IMR-90 (cell line): ENCODE measurements at regions of chr11 and their contacts with region 1.

Region 1: GRCh38 chr11:7513234-7514098 is at the start of gene PPFIBP2:
- DNase-seq: peak; percentile 47
- ATAC-seq: peak; percentile 98
- H3K4me3 ChIP-seq: peak within 1 kb of the TSS; percentile 58
- H3K27ac ChIP-seq: no peak within 1 kb of the TSS
- H3K4me1 ChIP-seq: peaks cover 2% of the 10 kb centered on the region; the same call in 1 of the 2 replicates
- H3K27me3 ChIP-seq: peaks cover 27% of the 10 kb centered on the region
- CTCF ChIP-seq: peak; percentile 60
- POLR2A ChIP-seq: no peak
- RAD21 ChIP-seq: peak; percentile 52
- total RNA-seq, gene PPFIBP2: 9.4 and 11.8 TPM in 2 replicates

Region 2: DNA sequence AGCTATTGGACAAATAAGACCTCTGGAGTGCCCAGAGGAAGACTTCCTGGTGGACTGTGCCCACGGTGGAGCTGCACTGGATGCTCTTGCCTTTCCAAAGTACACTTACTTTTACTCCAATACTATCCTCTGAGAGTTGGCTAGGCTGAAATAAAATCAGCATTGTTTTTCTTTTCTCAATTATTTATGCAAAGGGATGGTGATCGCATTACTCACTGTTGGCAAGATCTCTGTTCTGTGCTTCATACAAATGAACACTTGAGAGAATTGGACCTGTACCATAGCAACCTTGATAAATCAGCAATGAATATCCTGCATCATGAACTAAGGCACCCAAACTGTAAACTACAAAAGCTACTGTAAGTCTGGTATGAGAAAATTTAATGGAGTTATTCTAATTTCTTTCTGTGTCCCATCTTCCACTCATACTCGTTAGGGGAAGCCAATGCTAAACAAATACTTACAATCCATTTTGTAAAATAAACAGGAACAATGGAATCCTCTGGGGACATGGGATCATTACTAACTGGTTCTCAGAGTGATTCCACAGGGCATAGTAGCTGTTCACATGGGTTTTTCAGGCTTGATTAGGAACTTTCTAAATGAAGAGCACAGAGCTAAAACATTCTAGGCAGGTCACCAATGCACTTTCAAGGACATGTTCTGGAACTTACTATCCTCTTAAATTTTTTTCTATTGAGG is 466.8 kb before region 1 on chr11:
- CTCF ChIA-PET with region 1: no interaction called
- POLR2A ChIA-PET with region 1: no interaction called
- dilution Hi-C with region 1: no loop called
- in situ Hi-C with region 1: no loop called
- intact Hi-C with region 1: no loop called
- DNase-seq: peak; percentile 84
- ATAC-seq: peak; percentile 91
- H3K4me3 ChIP-seq: no peak overlapping the region
- H3K27ac ChIP-seq: no peak overlapping the region
- H3K4me1 ChIP-seq: no peaks in the 10 kb centered on the region
- H3K27me3 ChIP-seq: 0 out of 2 replicates have a peak, but pooled peaks cover 1% of the 10 kb centered on the region
- CTCF ChIP-seq: no peak
- POLR2A ChIP-seq: no peak
- RAD21 ChIP-seq: no peak

Region 3: GRCh38 chr11:7367803-7368202 is 145.7 kb before region 1 on chr11:
- CTCF ChIA-PET with region 1: no interaction called
- POLR2A ChIA-PET with region 1: no interaction called
- dilution Hi-C with region 1: no loop called
- in situ Hi-C with region 1: no loop called
- intact Hi-C with region 1: no loop called
- DNase-seq: no peak
- ATAC-seq: no peak
- H3K4me3 ChIP-seq: no peak overlapping the region
- H3K27ac ChIP-seq: no peak overlapping the region
- H3K4me1 ChIP-seq: no peaks in the 10 kb centered on the region
- H3K27me3 ChIP-seq: no peaks in the 10 kb centered on the region
- CTCF ChIP-seq: no peak
- POLR2A ChIP-seq: no peak
- RAD21 ChIP-seq: no peak

Region 4: DNA sequence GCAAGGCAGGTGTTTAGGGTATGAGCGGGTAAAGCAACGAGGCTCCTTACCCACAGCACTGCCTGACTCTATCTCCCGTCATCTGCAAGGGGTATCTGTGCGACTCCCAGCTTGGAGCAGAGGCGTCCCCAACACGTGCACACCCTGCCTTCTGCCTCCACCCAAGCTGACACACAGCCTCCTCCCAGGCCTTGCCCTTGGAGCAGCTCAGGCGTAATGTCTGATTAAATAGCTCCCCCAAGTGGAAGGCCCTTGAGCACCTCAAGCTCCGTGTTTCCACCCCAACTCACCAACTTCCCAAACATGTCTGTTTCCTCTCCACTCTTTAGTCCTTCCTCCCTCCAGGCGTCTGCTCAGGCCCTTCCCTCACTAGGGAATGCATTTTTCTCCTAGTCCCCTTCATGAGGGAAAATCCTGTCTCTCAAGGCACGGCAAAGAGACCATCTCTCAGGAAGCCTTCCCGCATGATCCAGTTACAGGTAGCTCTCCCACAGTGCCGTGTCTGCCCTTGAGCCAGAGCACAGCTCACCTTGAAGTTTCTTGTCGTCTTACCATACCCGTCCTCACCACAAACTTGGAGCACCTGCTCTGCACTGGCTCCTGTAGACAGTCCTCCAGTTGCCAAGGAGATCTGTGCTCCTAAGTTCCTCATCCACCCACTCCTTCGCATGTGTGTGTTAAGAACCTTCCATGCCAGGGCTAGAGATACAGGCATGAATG is 144.0 kb after region 1 on chr11:
- CTCF ChIA-PET with region 1: interaction called, 4 read pairs
- POLR2A ChIA-PET with region 1: no interaction called
- dilution Hi-C with region 1: no loop called
- in situ Hi-C with region 1: no loop called
- intact Hi-C with region 1: loop called (anchors 2 kb)
- DNase-seq: peak; percentile 68
- ATAC-seq: peak; percentile 100
- H3K4me3 ChIP-seq: no peak overlapping the region
- H3K27ac ChIP-seq: no peak overlapping the region
- H3K4me1 ChIP-seq: no peaks in the 10 kb centered on the region
- H3K27me3 ChIP-seq: no peaks in the 10 kb centered on the region
- CTCF ChIP-seq: peak; percentile 75
- POLR2A ChIP-seq: no peak
- RAD21 ChIP-seq: peak; percentile 84

Region 5: GRCh38 chr11:7665473-7666291 is 152.2 kb after region 1 on chr11:
- CTCF ChIA-PET with region 1: no interaction called
- POLR2A ChIA-PET with region 1: no interaction called
- dilution Hi-C with region 1: no loop called
- in situ Hi-C with region 1: no loop called
- intact Hi-C with region 1: loop called (anchors 1 kb)
- DNase-seq: peak; percentile 44
- ATAC-seq: peak; percentile 90
- H3K4me3 ChIP-seq: no peak overlapping the region
- H3K27ac ChIP-seq: no peak overlapping the region
- H3K4me1 ChIP-seq: no peaks in the 10 kb centered on the region
- H3K27me3 ChIP-seq: no peaks in the 10 kb centered on the region
- CTCF ChIP-seq: peak; percentile 68
- POLR2A ChIP-seq: no peak
- RAD21 ChIP-seq: peak; percentile 77

Region 6: DNA sequence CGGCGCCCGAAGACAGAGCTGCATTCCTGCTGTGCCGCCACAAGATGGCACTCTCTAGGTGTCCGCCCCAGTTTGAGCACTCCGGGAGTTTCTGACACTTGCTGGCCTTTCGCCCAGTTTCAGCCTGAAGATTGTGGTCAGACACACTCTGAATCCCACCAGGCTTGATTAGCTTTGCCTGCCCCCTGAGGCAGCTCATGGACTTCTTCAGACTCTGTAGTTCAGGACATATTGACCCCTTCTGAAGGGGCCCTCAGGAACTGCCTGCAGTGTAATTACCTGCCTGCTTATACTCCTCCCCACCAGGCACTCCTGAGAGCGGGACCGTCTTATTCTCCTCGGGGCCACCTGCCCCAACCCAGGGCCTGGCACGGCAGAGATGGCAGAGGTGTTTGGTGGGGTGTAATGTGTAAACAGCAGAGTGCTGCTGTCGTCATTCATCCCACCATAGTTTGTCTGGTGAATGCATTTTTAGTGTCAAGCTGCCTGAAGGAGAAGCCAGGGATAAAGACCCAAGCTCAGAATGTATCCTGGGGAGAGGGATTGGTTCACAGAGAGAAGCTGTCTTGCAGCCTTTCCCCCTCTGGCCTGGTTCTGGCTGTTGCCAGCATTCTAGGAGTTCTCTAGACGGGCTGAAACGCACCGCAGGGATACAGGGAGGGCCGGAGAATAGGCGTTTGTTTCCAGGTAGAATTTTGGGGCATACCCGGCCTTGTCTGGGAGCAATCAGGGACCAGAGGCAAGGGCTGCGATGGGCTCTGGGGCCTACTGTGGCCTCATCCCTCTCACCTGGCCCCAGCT is 520.0 kb after region 1 on chr11:
- CTCF ChIA-PET with region 1: no interaction called
- POLR2A ChIA-PET with region 1: no interaction called
- dilution Hi-C with region 1: no loop called
- in situ Hi-C with region 1: no loop called
- intact Hi-C with region 1: no loop called
- DNase-seq: peak; percentile 84
- ATAC-seq: peak; percentile 98
- H3K4me3 ChIP-seq: no peak overlapping the region
- H3K27ac ChIP-seq: no peak overlapping the region
- H3K4me1 ChIP-seq: 0 out of 2 replicates have a peak, but pooled peaks cover 1% of the 10 kb centered on the region
- H3K27me3 ChIP-seq: peaks cover 4% of the 10 kb centered on the region; the same call in 1 of the 2 replicates
- CTCF ChIP-seq: peak; percentile 95
- POLR2A ChIP-seq: no peak
- RAD21 ChIP-seq: peak; percentile 91